CD8-positive, alpha-beta T cell (primary cell): ENCODE measurements at regions of chr10 and their contacts with region 1.

Region 1: GRCh38 chr10:73495884-73496674 is at the start of gene PPP3CB:
- DNase-seq: peak; percentile 83 to 97 (median 89)
- ATAC-seq: peak; percentile 85
- H3K4me3 ChIP-seq: peak within 1 kb of the TSS; percentile 91 to 94
- H3K4me3 Mint-ChIP-seq: peak within 1 kb of the TSS; percentile 81
- H3K27ac ChIP-seq: peak within 1 kb of the TSS; percentile 87 to 93
- H3K27ac Mint-ChIP-seq: peak within 1 kb of the TSS; percentile 95
- H3K4me1 ChIP-seq: peaks cover 33% of the 10 kb centered on the region
- H3K4me1 Mint-ChIP-seq: peaks cover 49% of the 10 kb centered on the region
- H3K27me3 ChIP-seq: no peaks in the 10 kb centered on the region
- H3K27me3 Mint-ChIP-seq: no peaks in the 10 kb centered on the region
- CTCF ChIP-seq: no peak
- total RNA-seq, gene PPP3CB: 15.8 to 17.0 TPM

Region 2: GRCh38 chr10:72692057-72692910 is 803.8 kb before region 1 on chr10 and contains the start of gene MCU:
- CTCF ChIA-PET with region 1: no interaction called
- POLR2A ChIA-PET with region 1: no interaction called
- intact Hi-C with region 1: loop called in 1 of 2 experiments (anchors 5 kb)
- DNase-seq: peak; percentile 85 to 96 (median 92)
- ATAC-seq: peak; percentile 95
- H3K4me3 ChIP-seq: peak within 1 kb of the TSS; percentile 84 to 89
- H3K4me3 Mint-ChIP-seq: peak within 1 kb of the TSS; percentile 92
- H3K27ac ChIP-seq: peak within 1 kb of the TSS; percentile 37 to 45
- H3K27ac Mint-ChIP-seq: peak within 1 kb of the TSS; percentile 88
- H3K4me1 ChIP-seq: peaks cover 18% of the 10 kb centered on the region
- H3K4me1 Mint-ChIP-seq: peaks cover 33% of the 10 kb centered on the region
- H3K27me3 ChIP-seq: no peaks in the 10 kb centered on the region
- H3K27me3 Mint-ChIP-seq: peaks cover 4% of the 10 kb centered on the region
- CTCF ChIP-seq: no peak
- total RNA-seq, gene MCU: 6.7 to 7.2 TPM

Region 3: DNA sequence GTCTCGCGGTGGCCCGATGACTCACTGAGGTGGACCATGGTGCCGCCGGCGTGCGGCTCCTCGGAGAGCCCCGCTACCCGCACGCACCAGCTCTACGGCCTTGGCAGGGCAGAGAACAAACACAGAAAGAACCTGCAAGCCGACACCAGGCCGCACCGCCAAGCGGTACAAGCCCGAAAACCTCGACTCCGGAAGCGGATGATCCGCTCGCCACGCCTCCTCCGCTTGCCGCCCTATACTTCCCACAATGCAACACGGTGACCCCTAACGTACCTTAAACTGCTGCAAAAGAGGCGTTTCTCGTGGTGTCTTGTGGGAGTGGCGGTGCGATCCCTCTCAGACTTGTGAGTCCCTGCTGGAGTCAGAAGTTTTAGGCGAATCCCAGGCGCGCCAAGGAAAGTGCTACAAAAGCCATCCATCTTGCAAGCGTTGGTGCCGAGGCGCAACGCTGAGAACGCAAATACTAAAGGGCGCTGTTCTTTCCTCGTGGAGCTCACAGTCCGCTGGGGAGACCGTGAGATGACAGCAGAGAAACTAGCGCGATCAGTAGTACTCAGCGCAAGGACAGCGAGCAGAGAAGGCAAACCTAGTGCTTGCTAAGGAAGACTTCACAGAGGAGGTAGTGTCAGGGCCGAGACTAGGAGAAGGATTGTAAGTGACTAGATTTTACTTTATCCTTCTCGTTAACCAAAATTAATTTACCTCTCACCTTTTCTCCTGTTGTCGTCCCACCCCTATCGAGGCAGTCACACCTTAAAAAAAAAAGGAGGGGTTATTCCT is 243.4 kb before region 1 on chr10 and contains the start of gene MRPS16:
- CTCF ChIA-PET with region 1: no interaction called
- POLR2A ChIA-PET with region 1: interaction called, 8 read pairs
- intact Hi-C with region 1: loop called (anchors 1 to 2 kb)
- DNase-seq: peak; percentile 86 to 97 (median 93)
- ATAC-seq: peak; percentile 90
- H3K4me3 ChIP-seq: peak within 1 kb of the TSS; percentile 87 to 96
- H3K4me3 Mint-ChIP-seq: peak within 1 kb of the TSS; percentile 99
- H3K27ac ChIP-seq: peak within 1 kb of the TSS; percentile 80 to 94
- H3K27ac Mint-ChIP-seq: peak within 1 kb of the TSS; percentile 96
- H3K4me1 ChIP-seq: peaks cover 19% of the 10 kb centered on the region
- H3K4me1 Mint-ChIP-seq: peaks cover 46% of the 10 kb centered on the region
- H3K27me3 ChIP-seq: no peaks in the 10 kb centered on the region
- H3K27me3 Mint-ChIP-seq: no peaks in the 10 kb centered on the region
- CTCF ChIP-seq: no peak
- total RNA-seq, gene MRPS16: 23.6 to 28.7 TPM

Region 4: GRCh38 chr10:73469579-73469978 is 26.5 kb before region 1 on chr10:
- CTCF ChIA-PET with region 1: no interaction called
- POLR2A ChIA-PET with region 1: interaction called, 10 read pairs
- intact Hi-C with region 1: no loop called
- DNase-seq: no peak
- ATAC-seq: no peak
- H3K4me3 ChIP-seq: no peak overlapping the region
- H3K4me3 Mint-ChIP-seq: no peak overlapping the region
- H3K27ac ChIP-seq: no peak overlapping the region
- H3K27ac Mint-ChIP-seq: peak overlapping the region; percentile 4
- H3K4me1 ChIP-seq: no peaks in the 10 kb centered on the region
- H3K4me1 Mint-ChIP-seq: no peaks in the 10 kb centered on the region
- H3K27me3 ChIP-seq: no peaks in the 10 kb centered on the region
- H3K27me3 Mint-ChIP-seq: no peaks in the 10 kb centered on the region
- CTCF ChIP-seq: no peak

Region 5: GRCh38 chr10:73730153-73730906 is 234.3 kb after region 1 on chr10:
- CTCF ChIA-PET with region 1: no interaction called
- POLR2A ChIA-PET with region 1: interaction called, 9 read pairs
- intact Hi-C with region 1: loop called (anchors 1 to 5 kb)
- DNase-seq: peak; percentile 86 to 95 (median 89)
- ATAC-seq: peak; percentile 89
- H3K4me3 ChIP-seq: peak overlapping the region; percentile 98 to 100
- H3K4me3 Mint-ChIP-seq: peak overlapping the region; percentile 100
- H3K27ac ChIP-seq: peak overlapping the region; percentile 87 to 91
- H3K27ac Mint-ChIP-seq: peak overlapping the region; percentile 99
- H3K4me1 ChIP-seq: peaks cover 13% of the 10 kb centered on the region
- H3K4me1 Mint-ChIP-seq: peaks cover 29% of the 10 kb centered on the region
- H3K27me3 ChIP-seq: no peaks in the 10 kb centered on the region
- H3K27me3 Mint-ChIP-seq: no peaks in the 10 kb centered on the region
- CTCF ChIP-seq: no peak

Region 6: DNA sequence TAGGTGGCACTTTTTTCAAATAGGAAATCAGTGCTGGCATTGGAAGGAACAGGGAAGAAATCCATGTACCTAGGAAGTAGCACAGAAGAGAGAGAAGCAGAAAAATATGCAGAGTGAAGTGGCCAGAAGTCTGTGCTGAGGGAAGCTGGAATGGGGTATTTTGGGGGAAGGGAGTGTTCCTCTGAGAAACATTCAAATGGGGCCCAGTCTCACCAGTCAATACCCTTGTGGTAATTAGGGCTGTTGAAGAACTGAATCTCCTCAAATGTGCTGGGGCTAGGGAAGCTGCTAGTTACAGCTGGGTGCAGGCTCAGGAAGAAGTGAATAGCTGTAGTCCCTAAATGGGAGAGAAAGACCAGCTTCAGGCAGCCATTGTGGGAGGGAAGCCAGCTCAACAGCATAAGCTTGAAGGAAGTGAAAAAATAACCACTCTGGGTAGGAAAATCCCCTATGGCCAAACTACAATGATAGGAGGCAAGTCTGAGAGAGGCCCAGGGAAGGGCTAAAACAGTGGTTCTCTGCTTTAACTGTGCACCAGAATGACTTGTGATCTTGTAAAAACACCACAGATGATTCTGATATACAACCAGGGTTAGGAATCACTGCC is 307.7 kb after region 1 on chr10:
- CTCF ChIA-PET with region 1: no interaction called
- POLR2A ChIA-PET with region 1: no interaction called
- intact Hi-C with region 1: loop called in 1 of 2 experiments (anchors 2 kb)
- DNase-seq: no peak
- ATAC-seq: no peak
- H3K4me3 ChIP-seq: no peak overlapping the region
- H3K4me3 Mint-ChIP-seq: no peak overlapping the region
- H3K27ac ChIP-seq: no peak overlapping the region
- H3K27ac Mint-ChIP-seq: peak overlapping the region; percentile 41
- H3K4me1 ChIP-seq: peaks cover 29% of the 10 kb centered on the region
- H3K4me1 Mint-ChIP-seq: peaks cover 39% of the 10 kb centered on the region
- H3K27me3 ChIP-seq: no peaks in the 10 kb centered on the region
- H3K27me3 Mint-ChIP-seq: no peaks in the 10 kb centered on the region
- CTCF ChIP-seq: no peak